ENCODE measurements at regions of chr19 and their contacts with region 1.

Region 1: GRCh38 chr19:54137086-54137921 is at the start of gene CNOT3:
- DNase-seq: peak; percentile 100
- ATAC-seq: peak; percentile 87
- H3K4me3 Mint-ChIP-seq: peak within 1 kb of the TSS; percentile 80
- H3K27ac Mint-ChIP-seq: peak within 1 kb of the TSS; percentile 90
- H3K4me1 Mint-ChIP-seq: peaks cover 41% of the 10 kb centered on the region
- H3K27me3 Mint-ChIP-seq: no peaks in the 10 kb centered on the region
- total RNA-seq, gene CNOT3: 67.5 to 83.1 TPM

Region 2: GRCh38 chr19:54159352-54160181 is 22.3 kb after region 1 on chr19 and contains the start of gene LENG1:
- CTCF ChIA-PET with region 1: interaction called, 17 read pairs
- DNase-seq: peak; percentile 100
- ATAC-seq: peak; percentile 89
- H3K4me3 Mint-ChIP-seq: peak within 1 kb of the TSS; percentile 95
- H3K27ac Mint-ChIP-seq: peak within 1 kb of the TSS; percentile 98
- H3K4me1 Mint-ChIP-seq: peaks cover 64% of the 10 kb centered on the region
- H3K27me3 Mint-ChIP-seq: peaks cover 4% of the 10 kb centered on the region
- total RNA-seq, gene LENG1: 8.0 to 8.6 TPM

Region 3: GRCh38 chr19:54257116-54257480 is 119.8 kb after region 1 on chr19 and contains the start of gene LILRB5:
- CTCF ChIA-PET with region 1: no interaction called
- DNase-seq: no peak
- ATAC-seq: no peak
- H3K4me3 Mint-ChIP-seq: no peak within 1 kb of the TSS
- H3K27ac Mint-ChIP-seq: no peak within 1 kb of the TSS
- H3K4me1 Mint-ChIP-seq: no peaks in the 10 kb centered on the region
- H3K27me3 Mint-ChIP-seq: peaks cover 9% of the 10 kb centered on the region
- total RNA-seq, gene LILRB5: not detected